PC-3 (cell line): ENCODE measurements at regions of chr1 and their contacts with region 1.

Region 1: DNA sequence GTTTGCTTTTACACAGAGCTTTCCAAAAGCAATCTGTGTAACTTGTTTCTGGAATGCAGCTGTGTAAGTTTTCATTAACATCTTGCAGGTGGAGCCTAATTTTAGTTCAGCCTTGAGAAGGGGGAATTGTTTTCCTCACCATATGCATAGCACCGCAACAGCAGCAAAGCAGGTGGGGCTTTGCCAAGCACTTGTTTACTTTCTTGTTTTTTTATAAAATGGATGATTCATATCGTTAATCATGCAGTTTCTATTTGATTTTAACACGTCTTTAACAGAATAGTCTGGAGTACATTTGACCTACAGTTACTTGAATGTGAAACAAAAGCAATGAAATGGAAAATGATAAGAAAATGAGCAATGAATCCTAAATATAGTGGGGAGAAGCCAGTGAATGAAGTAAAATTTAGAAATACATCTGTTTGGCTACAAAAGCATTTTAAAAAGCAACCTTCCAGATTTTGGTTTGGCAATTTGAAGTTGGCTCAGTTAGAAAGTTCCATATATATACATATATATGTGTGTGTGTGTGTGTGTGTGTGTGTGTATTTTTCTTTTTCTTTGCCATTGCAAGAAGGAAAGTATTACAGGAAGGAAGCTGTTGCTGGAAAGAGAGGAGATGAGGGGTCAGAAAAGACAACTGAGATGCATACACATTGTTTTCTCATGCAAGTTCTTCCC is 119.0 kb upstream of the ADGRL2 start:
- DNase-seq: peak; percentile 87
- ATAC-seq: peak; percentile 80
- H3K4me3 ChIP-seq: peak overlapping the region; percentile 10; the same call in 1 of the 2 replicates
- H3K27ac ChIP-seq: peak overlapping the region; percentile 62
- H3K4me1 ChIP-seq: peaks cover 51% of the 10 kb centered on the region
- H3K27me3 ChIP-seq: no peaks in the 10 kb centered on the region
- CTCF ChIP-seq: no peak

Region 2: DNA sequence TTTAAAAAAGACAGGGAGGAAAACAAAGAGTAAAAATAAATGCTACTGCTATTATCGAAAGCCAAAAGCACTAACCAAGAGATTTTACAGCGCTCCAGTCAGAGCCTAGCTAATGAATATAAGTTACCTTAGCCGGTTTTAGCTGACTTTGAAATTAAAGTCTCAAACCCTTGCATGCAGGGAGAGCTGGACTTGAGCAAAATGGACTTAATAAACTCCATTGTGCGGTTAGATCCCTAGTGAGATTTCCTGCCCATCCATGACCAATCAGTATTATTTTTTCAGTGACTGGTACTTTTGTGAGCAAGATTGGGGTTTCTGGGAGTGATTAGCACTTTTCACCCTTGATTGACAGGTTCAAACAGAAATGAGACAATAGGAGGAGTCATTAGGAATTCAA is 214.3 kb before region 1 on chr1:
- CTCF ChIA-PET with region 1: no interaction called
- POLR2A ChIA-PET with region 1: no interaction called
- intact Hi-C with region 1: no loop called
- DNase-seq: no peak
- ATAC-seq: no peak
- H3K4me3 ChIP-seq: no peak overlapping the region
- H3K27ac ChIP-seq: no peak overlapping the region
- H3K4me1 ChIP-seq: no peaks in the 10 kb centered on the region
- H3K27me3 ChIP-seq: peaks cover 71% of the 10 kb centered on the region
- CTCF ChIP-seq: no peak

Region 3: GRCh38 chr1:81664341-81664740 is 17.4 kb before region 1 on chr1:
- CTCF ChIA-PET with region 1: no interaction called
- POLR2A ChIA-PET with region 1: no interaction called
- intact Hi-C with region 1: no loop called
- DNase-seq: no peak
- ATAC-seq: no peak
- H3K4me3 ChIP-seq: no peak overlapping the region
- H3K27ac ChIP-seq: no peak overlapping the region
- H3K4me1 ChIP-seq: peaks cover 18% of the 10 kb centered on the region
- H3K27me3 ChIP-seq: no peaks in the 10 kb centered on the region
- CTCF ChIP-seq: no peak

Region 4: DNA sequence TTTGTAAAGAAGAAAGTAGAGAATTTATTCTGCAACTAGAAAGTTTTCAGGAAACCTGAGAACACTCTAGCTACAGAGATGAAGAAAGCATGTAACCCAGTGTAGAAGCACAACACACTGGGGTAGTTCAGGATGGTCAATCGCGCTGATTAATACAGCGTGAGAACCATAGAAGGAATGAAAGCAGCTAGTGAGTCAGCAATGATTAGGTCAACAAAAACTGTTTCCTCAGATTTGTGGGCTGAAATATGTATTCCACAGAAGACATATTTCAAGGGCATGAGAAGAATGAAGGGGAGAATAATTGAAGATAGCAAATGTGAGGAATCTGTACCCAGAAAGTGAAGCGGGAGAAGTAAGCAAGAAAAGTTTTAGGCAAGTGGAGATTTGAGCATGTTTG is 21.2 kb after region 1 on chr1:
- CTCF ChIA-PET with region 1: no interaction called
- POLR2A ChIA-PET with region 1: interaction called, 3 read pairs
- intact Hi-C with region 1: loop called (anchors 2 kb)
- DNase-seq: peak; percentile 94
- ATAC-seq: peak; percentile 80
- H3K4me3 ChIP-seq: peak overlapping the region; percentile 50
- H3K27ac ChIP-seq: peak overlapping the region; percentile 97
- H3K4me1 ChIP-seq: peaks cover 73% of the 10 kb centered on the region
- H3K27me3 ChIP-seq: no peaks in the 10 kb centered on the region
- CTCF ChIP-seq: no peak

Region 5: GRCh38 chr1:81717230-81717629 is 35.5 kb after region 1 on chr1:
- CTCF ChIA-PET with region 1: no interaction called
- POLR2A ChIA-PET with region 1: no interaction called
- intact Hi-C with region 1: loop called (anchors 1 kb)
- DNase-seq: peak; percentile 93
- ATAC-seq: peak; percentile 96
- H3K4me3 ChIP-seq: no peak overlapping the region
- H3K27ac ChIP-seq: peak overlapping the region; percentile 79
- H3K4me1 ChIP-seq: peaks cover 16% of the 10 kb centered on the region
- H3K27me3 ChIP-seq: no peaks in the 10 kb centered on the region
- CTCF ChIP-seq: no peak

Region 6: GRCh38 chr1:81894867-81895266 is 213.1 kb after region 1 on chr1:
- CTCF ChIA-PET with region 1: no interaction called
- POLR2A ChIA-PET with region 1: no interaction called
- intact Hi-C with region 1: no loop called
- DNase-seq: no peak
- ATAC-seq: no peak
- H3K4me3 ChIP-seq: no peak overlapping the region
- H3K27ac ChIP-seq: no peak overlapping the region
- H3K4me1 ChIP-seq: no peaks in the 10 kb centered on the region
- H3K27me3 ChIP-seq: peaks cover 54% of the 10 kb centered on the region
- CTCF ChIP-seq: no peak